ENCODE measurements at regions of chr3 and their contacts with region 1.

Region 1: GRCh38 chr3:136196401-136197158 is 445 bp upstream of the MSL2 start:
- DNase-seq: peak; percentile 97 to 99
- ATAC-seq: peak; percentile 81 to 89
- H3K4me3 ChIP-seq: peak overlapping the region; percentile 82
- H3K27ac ChIP-seq: peak overlapping the region; percentile 97 to 99
- H3K4me1 ChIP-seq: peaks cover 11% of the 10 kb centered on the region
- CTCF ChIP-seq: no peak
- EP300 ChIP-seq: no peak
- POLR2A ChIP-seq: peak; percentile 72
- RAD21 ChIP-seq: no peak; a peak in 1 of 5 replicates

Region 2: GRCh38 chr3:135556174-135556573 is 640.4 kb before region 1 on chr3:
- CTCF ChIA-PET with region 1: no interaction called
- POLR2A ChIA-PET with region 1: interaction called, 10 read pairs
- DNase-seq: no peak
- ATAC-seq: no peak
- H3K4me3 ChIP-seq: no peak overlapping the region
- H3K27ac ChIP-seq: no peak overlapping the region
- H3K4me1 ChIP-seq: no peaks in the 10 kb centered on the region
- CTCF ChIP-seq: no peak
- EP300 ChIP-seq: no peak
- POLR2A ChIP-seq: no peak
- RAD21 ChIP-seq: no peak

Region 3: GRCh38 chr3:136232413-136232812 is 35.8 kb after region 1 on chr3:
- CTCF ChIA-PET with region 1: no interaction called
- POLR2A ChIA-PET with region 1: no interaction called
- DNase-seq: no peak
- ATAC-seq: no peak
- H3K4me3 ChIP-seq: no peak overlapping the region
- H3K27ac ChIP-seq: no peak overlapping the region
- H3K4me1 ChIP-seq: no peaks in the 10 kb centered on the region
- CTCF ChIP-seq: no peak
- EP300 ChIP-seq: no peak
- POLR2A ChIP-seq: no peak
- RAD21 ChIP-seq: no peak

Region 4: GRCh38 chr3:136250226-136250902 is 53.8 kb after region 1 on chr3 and contains the start of gene PCCB:
- CTCF ChIA-PET with region 1: no interaction called
- POLR2A ChIA-PET with region 1: interaction called, 10 read pairs
- DNase-seq: peak; percentile 87 to 93
- ATAC-seq: peak; percentile 99 to 100
- H3K4me3 ChIP-seq: peak within 1 kb of the TSS; percentile 64
- H3K27ac ChIP-seq: peak within 1 kb of the TSS; percentile 91 to 96
- H3K4me1 ChIP-seq: peaks cover 8% of the 10 kb centered on the region; the same call in 1 of the 3 replicates
- CTCF ChIP-seq: peak; percentile 47
- EP300 ChIP-seq: no peak
- POLR2A ChIP-seq: peak; percentile 77
- RAD21 ChIP-seq: peak; percentile 51 to 52; a peak in 4 of 5 replicates
- polyA plus RNA-seq, gene PCCB: 65.5 and 69.7 TPM in 2 replicates

Region 5: DNA sequence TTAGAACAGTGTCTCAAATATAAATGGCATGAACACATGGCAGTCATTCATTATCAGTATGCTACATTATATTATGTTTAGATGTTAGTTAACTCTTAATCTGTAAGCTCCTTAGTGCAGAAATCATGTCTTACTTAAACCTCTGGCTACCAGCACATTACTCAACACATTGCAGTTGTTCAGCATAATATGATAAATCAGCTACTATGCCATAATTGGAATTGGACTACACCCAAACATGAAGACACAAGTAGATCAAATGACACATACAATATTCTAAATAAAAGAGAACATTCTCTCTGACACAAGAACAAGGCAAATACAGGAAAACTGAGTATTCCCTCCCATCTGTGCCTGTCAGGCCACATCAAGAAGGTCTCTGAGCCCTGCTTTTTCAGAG is 169.7 kb after region 1 on chr3:
- CTCF ChIA-PET with region 1: no interaction called
- POLR2A ChIA-PET with region 1: no interaction called
- DNase-seq: no peak
- ATAC-seq: no peak
- H3K4me3 ChIP-seq: no peak overlapping the region
- H3K27ac ChIP-seq: no peak overlapping the region
- H3K4me1 ChIP-seq: no peaks in the 10 kb centered on the region
- CTCF ChIP-seq: no peak
- EP300 ChIP-seq: no peak
- POLR2A ChIP-seq: no peak
- RAD21 ChIP-seq: no peak

Measured in A549 (cell line).